ENCODE measurements at regions of chr2 and their contacts with region 1.

Region 1: DNA sequence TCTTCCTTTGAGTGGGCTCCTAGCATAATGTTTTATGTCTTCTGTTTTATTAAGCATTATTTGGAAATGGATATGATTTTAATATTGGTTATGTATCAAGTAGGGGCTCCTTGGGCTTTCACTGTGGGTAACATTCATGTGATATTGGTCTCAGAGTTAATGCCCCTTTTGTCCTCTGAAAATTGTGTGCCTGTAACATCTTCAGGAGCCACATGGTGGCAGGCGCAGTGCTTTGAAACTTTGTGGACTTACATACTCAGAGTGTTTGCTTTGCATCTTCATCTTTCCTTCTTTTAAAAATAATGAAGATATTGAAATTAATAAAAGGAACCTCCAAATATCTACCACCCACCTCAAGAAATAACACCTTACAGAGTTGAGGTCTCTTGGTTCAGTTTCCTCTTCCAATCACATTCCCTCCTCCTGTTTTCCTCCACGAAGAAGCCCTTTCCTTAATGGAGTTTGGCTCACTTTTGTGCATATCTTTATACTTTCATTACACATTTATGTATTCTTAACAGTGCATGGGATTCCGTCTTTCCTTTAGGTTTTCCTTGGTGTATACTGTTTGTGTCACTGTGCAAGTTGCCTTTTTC is 73.5 kb downstream of the LIMS1 start:
- DNase-seq: no peak
- ATAC-seq: no peak
- H3K4me3 Mint-ChIP-seq: no peak overlapping the region
- H3K27ac Mint-ChIP-seq: no peak overlapping the region
- H3K4me1 Mint-ChIP-seq: peaks cover 46% of the 10 kb centered on the region
- H3K27me3 Mint-ChIP-seq: no peaks in the 10 kb centered on the region
- CTCF ChIP-seq: no peak

Region 2: DNA sequence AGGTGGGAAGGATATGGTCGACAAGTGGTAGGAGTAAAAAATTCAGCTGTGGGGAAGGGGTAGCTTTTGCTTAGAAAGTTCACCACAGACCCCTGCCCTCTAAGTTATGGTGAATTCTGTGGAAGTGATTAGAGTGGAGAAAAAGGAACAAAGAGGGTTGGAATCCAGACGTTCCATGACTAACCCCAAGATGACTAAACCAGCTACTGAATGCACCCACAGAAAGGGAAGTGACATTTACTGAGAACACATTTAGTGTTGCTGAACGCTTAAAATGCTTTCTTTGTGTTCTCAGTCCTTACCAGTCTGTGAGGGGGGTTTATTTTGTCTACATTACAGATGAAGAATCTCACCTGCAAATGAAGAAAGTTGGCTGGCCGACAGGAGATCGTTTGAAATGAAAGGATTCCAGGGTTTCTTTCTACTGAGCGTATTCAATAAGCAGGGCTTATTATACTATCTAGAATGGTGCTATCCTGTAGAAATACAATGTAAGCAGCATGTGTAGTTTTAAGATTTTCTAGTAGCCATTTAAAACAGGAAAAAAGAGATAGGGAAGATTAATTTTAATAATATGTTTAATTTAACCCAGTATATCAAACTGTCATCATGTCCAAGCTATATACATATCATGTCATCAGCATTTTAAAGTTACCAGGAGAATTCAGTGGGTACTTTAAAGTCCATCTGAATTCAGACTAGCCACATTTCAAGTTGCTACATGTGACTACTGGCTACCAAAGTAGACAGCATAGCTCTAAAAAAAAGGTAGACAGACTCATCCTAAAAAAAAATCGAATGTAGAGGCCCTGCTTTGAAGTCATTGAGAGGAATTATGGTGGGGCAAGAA is 13.4 kb before region 1 on chr2:
- CTCF ChIA-PET with region 1: interaction called, 4 read pairs
- POLR2A ChIA-PET with region 1: interaction called, 9 read pairs
- intact Hi-C with region 1: loop called (anchors 1 kb)
- DNase-seq: no peak
- ATAC-seq: peak; percentile 75
- H3K4me3 Mint-ChIP-seq: peak overlapping the region; percentile 64
- H3K27ac Mint-ChIP-seq: peak overlapping the region; percentile 83
- H3K4me1 Mint-ChIP-seq: peaks cover 78% of the 10 kb centered on the region
- H3K27me3 Mint-ChIP-seq: no peaks in the 10 kb centered on the region
- CTCF ChIP-seq: no peak

Region 3: DNA sequence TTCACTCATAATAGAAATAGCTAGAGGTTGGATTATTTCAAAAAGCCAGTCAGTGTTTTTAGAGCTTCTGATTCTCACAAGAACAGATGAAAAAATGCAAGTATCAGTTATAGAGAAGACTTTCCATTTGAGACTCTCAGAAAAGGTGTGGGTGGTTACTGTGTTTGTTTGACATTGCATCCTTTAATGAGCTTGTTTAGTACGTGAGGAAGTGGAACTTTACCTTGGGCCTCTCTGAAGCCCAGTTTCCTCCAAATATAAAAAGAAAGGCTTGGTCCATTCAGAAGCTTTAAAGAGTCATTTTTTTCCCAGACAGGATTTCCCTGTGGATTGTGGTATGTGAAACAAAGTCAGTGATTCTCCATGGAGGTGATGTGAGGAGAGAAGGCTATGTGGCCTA is 21.6 kb after region 1 on chr2:
- CTCF ChIA-PET with region 1: interaction called, 64 read pairs
- POLR2A ChIA-PET with region 1: interaction called, 14 read pairs
- intact Hi-C with region 1: loop called (anchors 1 kb)
- DNase-seq: no peak
- ATAC-seq: peak; percentile 37
- H3K4me3 Mint-ChIP-seq: no peak overlapping the region
- H3K27ac Mint-ChIP-seq: peak overlapping the region; percentile 35
- H3K4me1 Mint-ChIP-seq: peaks cover 52% of the 10 kb centered on the region
- H3K27me3 Mint-ChIP-seq: no peaks in the 10 kb centered on the region
- CTCF ChIP-seq: no peak

Region 4: DNA sequence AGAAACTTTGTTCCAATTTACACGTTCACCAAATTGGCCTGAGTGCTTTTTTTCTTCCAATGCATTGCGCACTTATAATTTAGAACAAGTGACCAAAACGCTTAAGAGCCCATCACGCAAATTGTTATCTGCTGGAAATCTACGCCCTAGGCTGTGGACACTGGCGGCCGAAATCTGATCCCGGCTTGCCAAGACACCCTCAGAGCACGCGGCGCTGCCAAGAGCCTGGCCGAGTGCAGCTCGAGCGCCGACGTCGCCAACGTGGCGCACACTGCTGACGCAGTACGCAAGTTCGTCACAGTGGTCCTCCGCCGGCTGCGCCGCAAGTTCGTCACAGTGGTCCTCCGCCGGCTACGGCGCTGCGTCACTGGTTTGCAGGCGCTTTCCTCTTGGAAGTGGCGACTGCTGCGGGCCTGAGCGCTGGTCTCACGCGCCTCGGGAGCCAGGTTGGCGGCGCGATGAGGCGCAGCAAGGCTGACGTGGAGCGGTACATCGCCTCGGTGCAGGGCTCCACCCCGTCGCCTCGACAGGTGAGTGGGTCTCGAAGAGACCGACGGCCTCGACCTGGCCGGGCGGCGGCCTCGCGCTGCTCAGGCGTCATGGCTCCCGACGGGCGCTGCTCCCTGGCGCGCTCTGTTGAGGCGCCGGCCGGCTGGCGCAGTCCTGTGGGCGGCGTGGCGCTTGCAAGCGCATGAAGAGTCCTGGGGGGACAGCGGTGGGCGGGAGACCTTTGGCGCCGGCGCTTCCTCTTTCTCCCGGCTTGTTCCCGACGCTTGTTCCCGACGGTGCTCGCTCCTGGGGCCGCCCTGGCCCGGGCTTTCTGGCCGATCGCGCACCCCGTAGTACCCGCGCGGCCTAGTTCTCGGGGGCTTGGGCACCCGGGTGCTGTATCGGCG is 111.6 kb after region 1 on chr2 and contains the start of gene RANBP2:
- CTCF ChIA-PET with region 1: no interaction called
- POLR2A ChIA-PET with region 1: interaction called, 4 read pairs
- intact Hi-C with region 1: loop called (anchors 1 kb)
- DNase-seq: peak; percentile 91
- ATAC-seq: peak; percentile 94
- H3K4me3 Mint-ChIP-seq: peak within 1 kb of the TSS; percentile 93
- H3K27ac Mint-ChIP-seq: peak within 1 kb of the TSS; percentile 97
- H3K4me1 Mint-ChIP-seq: peaks cover 24% of the 10 kb centered on the region
- H3K27me3 Mint-ChIP-seq: no peaks in the 10 kb centered on the region
- CTCF ChIP-seq: no peak
- total RNA-seq, gene RANBP2: 66.7 and 68.5 TPM in 2 replicates

Region 5: DNA sequence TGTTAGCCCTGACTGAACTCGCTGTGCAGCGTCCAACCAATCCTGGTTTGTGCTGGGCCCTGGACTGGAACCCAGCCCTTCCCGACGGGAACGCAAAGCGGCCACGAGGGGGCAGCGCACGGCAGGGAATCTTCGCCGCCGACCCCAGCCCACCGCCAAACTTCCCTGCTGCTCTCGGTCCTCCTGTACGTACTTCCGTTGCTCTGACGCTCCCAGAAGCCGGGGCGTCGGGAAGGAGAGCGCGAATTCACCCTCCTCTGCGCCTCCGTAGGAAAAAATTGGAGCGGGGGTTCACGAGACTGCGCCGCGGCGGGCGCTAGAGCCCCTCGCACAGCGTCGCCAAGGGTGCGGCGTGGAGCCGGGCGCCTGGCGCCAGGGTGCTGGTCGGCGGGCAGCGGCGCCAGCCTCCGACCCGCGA is 520.3 kb after region 1 on chr2:
- CTCF ChIA-PET with region 1: no interaction called
- POLR2A ChIA-PET with region 1: no interaction called
- intact Hi-C with region 1: loop called (anchors 10 kb)
- DNase-seq: peak; percentile 53
- ATAC-seq: peak; percentile 60
- H3K4me3 Mint-ChIP-seq: peak overlapping the region; percentile 80
- H3K27ac Mint-ChIP-seq: no peak overlapping the region
- H3K4me1 Mint-ChIP-seq: peaks cover 15% of the 10 kb centered on the region
- H3K27me3 Mint-ChIP-seq: peaks cover 24% of the 10 kb centered on the region
- CTCF ChIP-seq: peak; percentile 20

Measured in activated B cell treated with CpG ODN at 0.5 μM for 24 hours (primary cell).